ENCODE measurements at regions of chr1 and their contacts with region 1.

Region 1: GRCh38 chr1:180252638-180253536 is 22.8 kb downstream of the LHX4 start:
- DNase-seq: peak in 8 of 9 donors; percentile 35 to 75 (median 46)
- ATAC-seq: peak; percentile 79
- H3K4me3 ChIP-seq: no peak overlapping the region
- H3K4me3 Mint-ChIP-seq: no peak overlapping the region
- H3K27ac ChIP-seq: no peak overlapping the region
- H3K27ac Mint-ChIP-seq: no peak overlapping the region
- H3K4me1 ChIP-seq: no peaks in the 10 kb centered on the region
- H3K4me1 Mint-ChIP-seq: peaks cover 0 to 2% (median 0%) of the 10 kb centered on the region in 7 donors
- H3K27me3 ChIP-seq: peaks cover 0 to 6% of the 10 kb centered on the region in 2 donors
- H3K27me3 Mint-ChIP-seq: peaks cover 2 to 64% (median 51%) of the 10 kb centered on the region in 5 donors

Region 2: GRCh38 chr1:180415985-180416633 is 163.2 kb after region 1 on chr1:
- CTCF ChIA-PET with region 1: interaction called, 4 read pairs
- POLR2A ChIA-PET with region 1: no interaction called
- intact Hi-C with region 1: loop called (anchors 1 to 2 kb)
- DNase-seq: peak in 1 of 9 donors; percentile 3
- ATAC-seq: peak; percentile 42
- H3K4me3 ChIP-seq: no peak overlapping the region
- H3K4me3 Mint-ChIP-seq: no peak overlapping the region
- H3K27ac ChIP-seq: no peak overlapping the region
- H3K27ac Mint-ChIP-seq: no peak overlapping the region
- H3K4me1 ChIP-seq: no peaks in the 10 kb centered on the region
- H3K4me1 Mint-ChIP-seq: peaks cover 0 to 2% (median 0%) of the 10 kb centered on the region in 7 donors
- H3K27me3 ChIP-seq: no peaks in the 10 kb centered on the region
- H3K27me3 Mint-ChIP-seq: no peaks in the 10 kb centered on the region

Measured in naive thymus-derived CD4-positive, alpha-beta T cell (primary cell).